ENCODE measurements at regions of chr10 and their contacts with region 1.

Region 1: DNA sequence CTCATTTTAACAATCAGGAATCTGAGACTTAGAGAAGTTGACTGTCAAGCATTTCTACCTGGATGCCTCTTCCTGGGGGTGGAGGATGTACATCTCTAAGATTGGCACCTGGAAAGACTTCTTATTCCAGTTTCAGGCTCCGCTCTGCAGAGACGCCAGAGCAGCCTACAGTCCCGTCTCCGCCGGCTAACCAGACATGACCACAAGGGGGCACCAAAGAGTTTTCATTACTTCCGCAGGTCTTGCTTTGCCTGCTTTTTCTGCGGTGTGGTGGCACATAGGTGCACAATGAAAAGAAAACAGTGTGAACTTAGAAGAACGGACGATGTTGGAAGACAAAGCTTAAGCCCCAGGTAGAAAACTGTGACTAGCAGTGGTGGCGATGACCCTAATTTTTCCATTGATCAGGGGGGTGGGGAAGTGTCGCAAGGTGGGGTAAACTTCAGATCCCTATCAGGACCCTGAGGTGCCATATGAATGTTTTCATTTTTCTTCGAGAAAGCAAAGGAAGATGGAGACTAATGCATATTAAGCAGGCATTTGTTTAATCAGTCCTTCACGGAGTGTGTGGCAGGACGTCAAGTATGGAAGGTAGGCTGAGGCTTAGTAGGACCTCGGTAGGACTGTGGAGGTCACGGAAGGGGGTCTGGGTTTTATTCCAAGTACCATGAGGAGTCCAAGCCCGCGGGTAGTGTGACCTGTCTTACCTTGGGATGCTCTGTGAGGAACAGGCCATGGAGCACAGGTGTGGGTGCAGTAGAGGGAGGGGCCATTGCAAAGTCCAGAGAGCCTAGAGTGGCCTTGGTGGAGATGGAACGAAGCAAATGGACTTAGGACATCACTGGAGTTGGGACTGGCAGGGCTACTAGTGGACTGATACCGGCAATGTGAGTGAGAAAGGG is 60.1 kb upstream of the SORCS3 start:
- DNase-seq: peak; percentile 51 to 81 (median 65)
- ATAC-seq: peak; percentile 83
- H3K4me3 ChIP-seq: no peak overlapping the region
- H3K4me3 Mint-ChIP-seq: no peak overlapping the region
- H3K27ac ChIP-seq: no peak overlapping the region
- H3K27ac Mint-ChIP-seq: no peak overlapping the region
- H3K4me1 ChIP-seq: peaks cover 7% of the 10 kb centered on the region
- H3K4me1 Mint-ChIP-seq: peaks cover 17% of the 10 kb centered on the region
- H3K27me3 ChIP-seq: peaks cover 0 to 7% of the 10 kb centered on the region in 2 experiments
- H3K27me3 Mint-ChIP-seq: peaks cover 20% of the 10 kb centered on the region
- CTCF ChIP-seq: peak; percentile 96

Region 2: DNA sequence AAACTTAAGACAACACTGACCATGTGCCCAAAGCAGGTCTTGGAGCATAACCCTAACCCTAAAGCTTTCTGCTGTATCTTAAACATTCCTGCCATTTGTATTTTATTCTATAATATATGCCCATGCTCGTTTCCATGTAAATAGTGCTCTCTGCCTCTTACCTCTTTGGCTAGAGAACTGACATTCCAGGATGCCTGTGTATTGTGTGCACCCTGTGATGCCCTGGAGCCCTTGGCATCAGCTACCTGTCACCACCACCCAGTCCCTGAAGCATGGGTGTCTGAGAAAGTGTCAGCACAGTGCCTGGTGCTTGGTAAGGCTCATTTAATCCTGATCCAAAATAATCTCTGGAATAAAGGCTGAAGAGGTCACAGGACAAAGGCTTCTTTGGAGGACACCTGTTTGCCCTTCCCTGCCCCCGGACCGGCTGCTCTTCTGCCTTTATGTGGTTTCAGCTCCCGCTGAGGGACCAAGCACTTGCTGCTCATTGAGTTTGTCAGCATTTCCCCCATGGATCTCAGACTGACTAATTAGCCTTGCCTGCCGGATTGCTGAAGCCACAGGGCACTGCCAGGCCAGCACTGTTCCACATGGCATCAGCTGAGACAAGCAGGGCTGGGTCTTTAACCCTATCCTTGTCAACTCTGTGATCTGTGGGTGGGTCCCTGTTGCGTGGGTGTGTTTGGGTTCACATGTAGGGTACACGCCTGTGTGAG is 79.0 kb before region 1 on chr10:
- CTCF ChIA-PET with region 1: no interaction called
- POLR2A ChIA-PET with region 1: no interaction called
- intact Hi-C with region 1: no loop called
- DNase-seq: no peak
- ATAC-seq: no peak
- H3K4me3 ChIP-seq: no peak overlapping the region
- H3K4me3 Mint-ChIP-seq: no peak overlapping the region
- H3K27ac ChIP-seq: no peak overlapping the region
- H3K27ac Mint-ChIP-seq: no peak overlapping the region
- H3K4me1 ChIP-seq: no peaks in the 10 kb centered on the region
- H3K4me1 Mint-ChIP-seq: no peaks in the 10 kb centered on the region
- H3K27me3 ChIP-seq: peaks cover 0 to 3% of the 10 kb centered on the region in 2 experiments
- H3K27me3 Mint-ChIP-seq: peaks cover 17% of the 10 kb centered on the region
- CTCF ChIP-seq: no peak

Region 3: DNA sequence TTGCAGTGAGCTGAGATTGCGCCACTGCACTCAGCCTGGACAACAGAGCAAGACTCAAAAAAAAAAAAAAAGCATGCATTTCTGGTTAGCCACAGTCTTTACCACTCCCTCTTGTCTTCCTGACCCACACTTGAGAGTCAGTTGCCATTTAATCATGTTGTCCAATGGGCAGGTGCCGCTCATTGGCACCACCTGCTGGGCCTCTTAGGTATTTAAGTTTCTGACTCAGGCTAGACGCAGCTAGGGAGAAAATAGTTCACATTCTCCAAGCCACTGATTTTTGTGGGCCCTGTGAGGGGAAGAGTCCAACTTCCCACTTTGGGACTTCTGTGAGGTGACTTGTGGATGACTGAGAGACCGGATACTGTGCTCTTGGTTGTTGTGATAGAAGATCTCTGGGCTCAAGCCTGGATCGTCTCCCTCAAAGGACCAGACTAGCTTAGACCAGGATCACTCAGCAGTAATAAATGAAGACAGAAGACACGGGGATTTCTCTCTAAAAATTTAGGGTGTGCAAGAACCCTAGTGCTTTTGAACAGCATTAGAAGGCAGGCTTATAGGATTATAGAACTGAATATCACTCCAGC is 33.3 kb after region 1 on chr10:
- CTCF ChIA-PET with region 1: no interaction called
- POLR2A ChIA-PET with region 1: no interaction called
- intact Hi-C with region 1: loop called in 1 of 2 experiments (anchors 2 kb)
- DNase-seq: peak in 5 of 14 experiments; percentile 6 to 41 (median 35)
- ATAC-seq: no peak
- H3K4me3 ChIP-seq: no peak overlapping the region
- H3K4me3 Mint-ChIP-seq: no peak overlapping the region
- H3K27ac ChIP-seq: no peak overlapping the region
- H3K27ac Mint-ChIP-seq: no peak overlapping the region
- H3K4me1 ChIP-seq: no peaks in the 10 kb centered on the region
- H3K4me1 Mint-ChIP-seq: no peaks in the 10 kb centered on the region
- H3K27me3 ChIP-seq: peaks cover 4 to 12% of the 10 kb centered on the region in 2 experiments
- H3K27me3 Mint-ChIP-seq: peaks cover 23% of the 10 kb centered on the region
- CTCF ChIP-seq: peak; percentile 36

Region 4: GRCh38 chr10:104622598-104623209 is 41.7 kb after region 1 on chr10:
- CTCF ChIA-PET with region 1: no interaction called
- POLR2A ChIA-PET with region 1: no interaction called
- intact Hi-C with region 1: loop called in 1 of 2 experiments (anchors 2 kb)
- DNase-seq: peak in 4 of 14 experiments; percentile 6 to 39 (median 20)
- ATAC-seq: no peak
- H3K4me3 ChIP-seq: no peak overlapping the region
- H3K4me3 Mint-ChIP-seq: no peak overlapping the region
- H3K27ac ChIP-seq: no peak overlapping the region
- H3K27ac Mint-ChIP-seq: no peak overlapping the region
- H3K4me1 ChIP-seq: no peaks in the 10 kb centered on the region
- H3K4me1 Mint-ChIP-seq: no peaks in the 10 kb centered on the region
- H3K27me3 ChIP-seq: peaks cover 6 to 7% of the 10 kb centered on the region in 2 experiments
- H3K27me3 Mint-ChIP-seq: peaks cover 59% of the 10 kb centered on the region
- CTCF ChIP-seq: no peak

Region 5: GRCh38 chr10:104925232-104925851 is 344.3 kb after region 1 on chr10:
- CTCF ChIA-PET with region 1: no interaction called
- POLR2A ChIA-PET with region 1: no interaction called
- intact Hi-C with region 1: loop called in 1 of 2 experiments (anchors 10 kb)
- DNase-seq: peak in 4 of 14 experiments; percentile 31 to 48 (median 42)
- ATAC-seq: no peak
- H3K4me3 ChIP-seq: no peak overlapping the region
- H3K4me3 Mint-ChIP-seq: no peak overlapping the region
- H3K27ac ChIP-seq: no peak overlapping the region
- H3K27ac Mint-ChIP-seq: no peak overlapping the region
- H3K4me1 ChIP-seq: no peaks in the 10 kb centered on the region
- H3K4me1 Mint-ChIP-seq: no peaks in the 10 kb centered on the region
- H3K27me3 ChIP-seq: no peaks in the 10 kb centered on the region
- H3K27me3 Mint-ChIP-seq: peaks cover 4% of the 10 kb centered on the region
- CTCF ChIP-seq: peak; percentile 57